Caco-2 (cell line): ENCODE measurements at regions of chr20 and their contacts with region 1.

Region 1: DNA sequence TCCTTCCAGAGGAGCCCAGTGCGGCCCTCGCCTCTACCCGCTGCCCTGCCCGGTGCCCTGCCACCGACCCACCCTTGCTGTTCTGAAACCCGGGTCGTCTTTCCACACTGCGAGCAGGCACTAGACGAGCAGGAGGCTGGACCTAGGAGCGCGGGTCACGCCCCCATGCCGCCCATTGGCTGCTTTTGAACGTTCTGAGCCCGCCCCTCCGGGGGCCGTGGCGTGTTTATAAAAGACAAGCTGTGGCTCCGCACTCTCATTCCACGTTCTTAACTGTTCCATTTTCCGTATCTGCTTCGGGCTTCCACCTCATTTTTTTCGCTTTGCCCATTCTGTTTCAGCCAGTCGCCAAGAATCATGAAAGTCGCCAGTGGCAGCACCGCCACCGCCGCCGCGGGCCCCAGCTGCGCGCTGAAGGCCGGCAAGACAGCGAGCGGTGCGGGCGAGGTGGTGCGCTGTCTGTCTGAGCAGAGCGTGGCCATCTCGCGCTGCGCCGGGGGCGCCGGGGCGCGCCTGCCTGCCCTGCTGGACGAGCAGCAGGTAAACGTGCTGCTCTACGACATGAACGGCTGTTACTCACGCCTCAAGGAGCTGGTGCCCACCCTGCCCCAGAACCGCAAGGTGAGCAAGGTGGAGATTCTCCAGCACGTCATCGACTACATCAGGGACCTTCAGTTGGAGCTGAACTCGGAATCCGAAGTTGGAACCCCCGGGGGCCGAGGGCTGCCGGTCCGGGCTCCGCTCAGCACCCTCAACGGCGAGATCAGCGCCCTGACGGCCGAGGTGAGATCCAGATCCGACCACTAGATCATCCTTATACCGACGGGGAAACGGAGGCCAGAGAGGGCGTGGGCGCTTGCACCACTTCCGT is at the start of gene ID1:
- DNase-seq: peak; percentile 100
- H3K4me3 ChIP-seq: peak within 1 kb of the TSS; percentile 63
- H3K4me3 Mint-ChIP-seq: peak within 1 kb of the TSS; percentile 88
- H3K27ac Mint-ChIP-seq: peak within 1 kb of the TSS; percentile 98
- H3K4me1 ChIP-seq: peaks cover 54% of the 10 kb centered on the region
- H3K4me1 Mint-ChIP-seq: peaks cover 49% of the 10 kb centered on the region
- H3K27me3 ChIP-seq: no peaks in the 10 kb centered on the region
- H3K27me3 Mint-ChIP-seq: no peaks in the 10 kb centered on the region
- CTCF ChIP-seq: no peak
- total RNA-seq, gene ID1: 157 and 163 TPM in 2 replicates

Region 2: GRCh38 chr20:31514159-31515071 is 90.9 kb before region 1 on chr20 and contains the start of gene HM13:
- CTCF ChIA-PET with region 1: no interaction called
- POLR2A ChIA-PET with region 1: interaction called, 3 read pairs
- intact Hi-C with region 1: loop called (anchors 2 kb)
- DNase-seq: peak; percentile 97 to 98
- H3K4me3 ChIP-seq: peak within 1 kb of the TSS; percentile 74
- H3K4me3 Mint-ChIP-seq: no peak within 1 kb of the TSS
- H3K27ac Mint-ChIP-seq: no peak within 1 kb of the TSS
- H3K4me1 ChIP-seq: peaks cover 22% of the 10 kb centered on the region
- H3K4me1 Mint-ChIP-seq: no peaks in the 10 kb centered on the region
- H3K27me3 ChIP-seq: no peaks in the 10 kb centered on the region
- H3K27me3 Mint-ChIP-seq: no peaks in the 10 kb centered on the region
- CTCF ChIP-seq: peak; percentile 98 to 100
- total RNA-seq, gene HM13: 435 and 443 TPM in 2 replicates

Region 3: DNA sequence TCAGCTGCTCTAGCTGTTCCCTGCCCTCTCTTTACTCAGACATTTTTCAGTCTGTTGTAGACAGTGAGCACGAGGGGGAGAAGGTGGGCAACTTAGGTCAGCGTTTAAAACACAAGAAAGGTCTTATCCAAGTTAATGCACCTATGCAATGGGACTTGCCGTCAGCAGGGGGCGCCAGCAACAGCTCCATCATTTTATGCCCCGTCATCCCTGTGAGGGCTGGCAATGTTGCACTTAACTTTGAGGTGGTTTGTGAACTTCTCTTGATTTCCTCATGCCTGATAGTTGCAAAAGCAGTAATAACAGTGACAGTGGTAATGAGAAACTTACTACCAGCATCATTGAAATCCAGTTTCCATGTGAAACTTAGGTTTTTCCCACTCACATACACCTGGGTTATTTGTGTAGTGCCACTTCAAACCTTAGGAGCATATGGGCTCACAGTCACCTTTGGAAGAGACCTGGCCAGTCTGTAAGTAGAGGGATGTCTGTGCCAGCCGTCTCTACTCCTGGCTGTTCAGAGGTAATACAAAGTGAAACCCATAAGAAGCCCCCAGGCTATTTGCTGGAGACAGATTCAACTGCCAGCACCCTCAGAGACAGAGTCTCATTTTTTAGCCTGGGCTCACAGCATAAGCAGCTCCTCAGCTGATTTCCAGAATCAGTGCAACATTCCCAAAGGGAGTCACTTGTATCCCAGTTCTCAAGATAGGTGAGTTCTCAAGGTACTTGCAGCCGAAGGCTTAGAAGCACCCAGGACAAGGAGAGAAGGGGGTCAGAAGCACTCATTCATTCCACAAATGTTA is 45.0 kb before region 1 on chr20:
- CTCF ChIA-PET with region 1: interaction called, 1,708 read pairs
- POLR2A ChIA-PET with region 1: interaction called, 10 read pairs
- intact Hi-C with region 1: no loop called
- DNase-seq: peak; percentile 85 to 87
- H3K4me3 ChIP-seq: no peak overlapping the region
- H3K4me3 Mint-ChIP-seq: no peak overlapping the region
- H3K27ac Mint-ChIP-seq: peak overlapping the region; percentile 68
- H3K4me1 ChIP-seq: peaks cover 8% of the 10 kb centered on the region
- H3K4me1 Mint-ChIP-seq: peaks cover 4% of the 10 kb centered on the region
- H3K27me3 ChIP-seq: no peaks in the 10 kb centered on the region
- H3K27me3 Mint-ChIP-seq: no peaks in the 10 kb centered on the region
- CTCF ChIP-seq: peak; percentile 98 to 99

Region 4: GRCh38 chr20:31580706-31581105 is 24.6 kb before region 1 on chr20:
- CTCF ChIA-PET with region 1: interaction called, 1,708 read pairs
- POLR2A ChIA-PET with region 1: interaction called, 12 read pairs
- intact Hi-C with region 1: no loop called
- DNase-seq: no peak
- H3K4me3 ChIP-seq: no peak overlapping the region
- H3K4me3 Mint-ChIP-seq: no peak overlapping the region
- H3K27ac Mint-ChIP-seq: peak overlapping the region; percentile 4
- H3K4me1 ChIP-seq: no peaks in the 10 kb centered on the region
- H3K4me1 Mint-ChIP-seq: peaks cover 14% of the 10 kb centered on the region
- H3K27me3 ChIP-seq: no peaks in the 10 kb centered on the region
- H3K27me3 Mint-ChIP-seq: no peaks in the 10 kb centered on the region
- CTCF ChIP-seq: no peak

Region 5: GRCh38 chr20:31587545-31588389 is 17.5 kb before region 1 on chr20:
- CTCF ChIA-PET with region 1: interaction called, 31 read pairs
- POLR2A ChIA-PET with region 1: interaction called, 9 read pairs
- intact Hi-C with region 1: loop called (anchors 1 kb)
- DNase-seq: peak in 1 of 2 experiments; percentile 68
- H3K4me3 ChIP-seq: peak overlapping the region; percentile 53
- H3K4me3 Mint-ChIP-seq: peak overlapping the region; percentile 72
- H3K27ac Mint-ChIP-seq: peak overlapping the region; percentile 78
- H3K4me1 ChIP-seq: peaks cover 23% of the 10 kb centered on the region
- H3K4me1 Mint-ChIP-seq: peaks cover 17% of the 10 kb centered on the region
- H3K27me3 ChIP-seq: no peaks in the 10 kb centered on the region
- H3K27me3 Mint-ChIP-seq: no peaks in the 10 kb centered on the region
- CTCF ChIP-seq: no peak

Region 6: DNA sequence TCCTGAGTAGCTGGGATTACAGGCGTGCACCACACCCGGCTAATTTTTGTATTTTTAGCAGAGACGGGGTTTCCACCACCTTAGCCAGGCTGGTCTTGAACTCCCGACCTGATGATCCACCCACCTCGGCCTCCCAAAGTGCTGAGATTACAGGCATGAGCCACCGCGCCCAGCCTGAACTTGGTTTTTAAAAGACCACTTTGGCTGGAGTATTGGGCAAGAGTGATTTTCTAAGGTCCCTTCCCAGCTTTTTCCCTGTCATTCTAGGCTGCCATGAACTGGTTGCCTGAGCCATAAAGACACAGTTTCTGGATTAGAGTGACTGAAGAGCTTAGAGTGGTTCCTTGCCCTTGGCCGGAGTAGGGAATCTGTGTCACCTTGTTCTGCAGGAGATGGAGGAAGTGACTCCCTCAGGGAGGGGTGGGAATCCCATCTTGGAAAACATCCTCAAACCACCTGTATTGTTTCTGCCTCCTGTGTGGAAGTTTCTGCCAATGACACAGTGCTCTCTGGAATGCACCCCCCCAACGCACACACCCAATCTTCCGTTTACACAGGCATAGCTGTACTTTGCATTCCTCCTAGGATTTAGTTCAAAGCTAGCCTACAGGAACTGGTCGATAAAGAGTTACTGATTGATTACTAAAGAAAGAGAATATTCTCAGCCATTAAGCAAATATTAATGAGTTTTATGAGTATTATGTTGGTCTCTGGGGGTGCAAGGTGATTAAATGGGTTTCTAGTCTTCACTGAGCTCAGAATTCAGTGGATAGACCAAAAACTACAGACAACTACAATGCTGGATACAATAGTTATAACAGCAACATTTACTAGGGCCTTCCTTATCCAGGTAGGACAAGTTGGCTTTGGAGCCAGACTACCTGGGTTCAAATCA is 99.2 kb after region 1 on chr20:
- CTCF ChIA-PET with region 1: interaction called, 4 read pairs
- POLR2A ChIA-PET with region 1: interaction called, 15 read pairs
- intact Hi-C with region 1: loop called (anchors 1 kb)
- DNase-seq: peak; percentile 99 to 100
- H3K4me3 ChIP-seq: no peak overlapping the region
- H3K4me3 Mint-ChIP-seq: peak overlapping the region; percentile 48
- H3K27ac Mint-ChIP-seq: peak overlapping the region; percentile 98
- H3K4me1 ChIP-seq: peaks cover 93% of the 10 kb centered on the region
- H3K4me1 Mint-ChIP-seq: peaks cover 74% of the 10 kb centered on the region
- H3K27me3 ChIP-seq: no peaks in the 10 kb centered on the region
- H3K27me3 Mint-ChIP-seq: no peaks in the 10 kb centered on the region
- CTCF ChIP-seq: no peak